HepG2 (cell line): ENCODE measurements at regions of chr5 and their contacts with region 1.

Region 1: GRCh38 chr5:66306105-66306843 is 162.2 kb downstream of the SREK1 start:
- DNase-seq: peak; percentile 55
- ATAC-seq: peak; percentile 93
- H3K4me3 ChIP-seq: no peak overlapping the region
- H3K27ac ChIP-seq: no peak overlapping the region
- H3K4me1 ChIP-seq: no peaks in the 10 kb centered on the region
- H3K27me3 ChIP-seq: peaks cover 0 to 7% of the 10 kb centered on the region in 2 experiments; a peak in 2 of 5 replicates
- CTCF ChIP-seq: peak; percentile 78
- EP300 ChIP-seq: no peak
- POLR2A ChIP-seq: no peak
- RAD21 ChIP-seq: no peak

Region 2: DNA sequence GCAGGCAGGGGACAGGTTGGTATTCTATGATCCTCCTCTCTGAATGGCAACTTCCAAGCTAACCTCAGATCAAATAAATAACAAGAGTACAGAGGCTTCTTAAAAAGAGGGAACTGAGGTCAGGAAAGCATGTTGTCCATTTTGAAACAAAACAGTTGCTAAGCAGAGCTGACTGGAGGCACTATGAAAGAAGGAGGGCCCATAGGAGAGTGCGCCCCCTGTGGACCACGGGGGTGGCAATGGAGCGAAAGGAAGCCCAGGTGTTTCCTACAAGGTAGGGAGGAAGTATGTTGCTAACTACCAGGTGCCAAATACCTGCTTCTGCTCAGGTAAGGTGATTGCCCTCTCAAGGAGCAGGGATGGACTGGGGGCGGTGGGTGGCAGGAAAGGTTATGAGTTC is 188.1 kb after region 1 on chr5:
- CTCF ChIA-PET with region 1: no interaction called
- POLR2A ChIA-PET with region 1: no interaction called
- in situ Hi-C with region 1: no loop called
- intact Hi-C with region 1: loop called (anchors 1 kb)
- DNase-seq: no peak
- ATAC-seq: peak; percentile 32; the same call in 1 of the 3 replicates
- H3K4me3 ChIP-seq: no peak overlapping the region
- H3K27ac ChIP-seq: no peak overlapping the region
- H3K4me1 ChIP-seq: no peaks in the 10 kb centered on the region
- H3K27me3 ChIP-seq: no peaks in the 10 kb centered on the region; a peak in 1 of 5 replicates
- CTCF ChIP-seq: peak; percentile 24; the same call in 1 of the 2 replicates
- EP300 ChIP-seq: no peak
- POLR2A ChIP-seq: no peak
- RAD21 ChIP-seq: no peak

Region 3: GRCh38 chr5:66757188-66757833 is 451.0 kb after region 1 on chr5:
- CTCF ChIA-PET with region 1: interaction called, 46 read pairs
- POLR2A ChIA-PET with region 1: no interaction called
- in situ Hi-C with region 1: loop called (anchors 5 kb)
- intact Hi-C with region 1: loop called (anchors 1 kb)
- DNase-seq: peak; percentile 20
- ATAC-seq: no peak
- H3K4me3 ChIP-seq: no peak overlapping the region
- H3K27ac ChIP-seq: no peak overlapping the region
- H3K4me1 ChIP-seq: no peaks in the 10 kb centered on the region
- H3K27me3 ChIP-seq: peaks cover 0 to 7% of the 10 kb centered on the region in 2 experiments; a peak in 2 of 5 replicates
- CTCF ChIP-seq: peak; percentile 53
- EP300 ChIP-seq: no peak
- POLR2A ChIP-seq: no peak
- RAD21 ChIP-seq: no peak

Region 4: DNA sequence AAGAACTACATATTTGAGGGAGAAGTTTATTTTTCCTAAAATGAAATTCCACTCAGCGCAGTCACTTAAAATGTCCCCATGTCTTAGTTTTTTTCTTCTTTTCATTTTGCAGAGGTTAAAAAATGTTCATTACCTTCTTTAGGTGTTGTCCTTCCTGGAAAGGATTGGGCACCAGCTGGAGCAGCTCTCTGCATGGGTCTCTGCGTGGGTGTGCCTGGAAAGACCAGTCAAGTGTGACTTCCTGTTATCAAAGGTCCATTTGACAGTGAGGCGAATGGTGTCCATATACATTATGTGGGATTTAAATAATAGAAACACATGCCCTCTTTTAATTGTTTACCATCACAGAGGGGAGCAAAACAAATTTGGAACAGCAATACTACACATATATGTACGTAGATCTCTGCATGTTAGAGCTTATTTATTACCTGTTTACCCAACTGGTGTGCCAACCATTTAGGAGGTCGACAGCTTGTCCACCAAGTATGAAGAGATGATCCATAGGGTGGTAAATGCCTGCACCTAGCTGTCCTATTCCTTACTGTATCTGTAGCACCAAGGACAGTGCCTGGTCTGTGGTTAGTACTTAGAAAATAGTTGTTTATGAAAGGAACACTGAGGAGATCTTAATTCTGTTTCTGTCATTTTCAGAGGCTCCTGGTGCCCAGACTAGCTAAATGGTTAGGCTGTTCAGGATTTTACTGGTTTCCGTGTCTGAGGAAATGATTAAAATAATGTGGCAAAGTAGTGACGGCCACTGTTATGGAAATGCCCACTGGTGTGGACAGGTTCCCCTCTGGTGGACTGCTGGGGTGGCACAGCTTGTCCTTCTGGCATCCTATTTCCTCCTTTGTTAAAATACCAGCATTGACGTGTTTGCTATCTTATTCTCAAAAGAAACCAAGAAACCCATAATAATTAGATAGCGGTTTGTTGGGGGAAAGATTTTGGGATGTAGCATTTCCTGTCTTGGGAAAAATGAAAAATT is 490.3 kb after region 1 on chr5:
- CTCF ChIA-PET with region 1: no interaction called
- POLR2A ChIA-PET with region 1: no interaction called
- in situ Hi-C with region 1: no loop called
- intact Hi-C with region 1: loop called (anchors 1 kb)
- DNase-seq: no peak
- ATAC-seq: peak; percentile 36; the same call in 1 of the 3 replicates
- H3K4me3 ChIP-seq: no peak overlapping the region
- H3K27ac ChIP-seq: no peak overlapping the region
- H3K4me1 ChIP-seq: no peaks in the 10 kb centered on the region
- H3K27me3 ChIP-seq: no peaks in the 10 kb centered on the region
- CTCF ChIP-seq: no peak
- EP300 ChIP-seq: no peak
- POLR2A ChIP-seq: no peak
- RAD21 ChIP-seq: no peak

Region 5: DNA sequence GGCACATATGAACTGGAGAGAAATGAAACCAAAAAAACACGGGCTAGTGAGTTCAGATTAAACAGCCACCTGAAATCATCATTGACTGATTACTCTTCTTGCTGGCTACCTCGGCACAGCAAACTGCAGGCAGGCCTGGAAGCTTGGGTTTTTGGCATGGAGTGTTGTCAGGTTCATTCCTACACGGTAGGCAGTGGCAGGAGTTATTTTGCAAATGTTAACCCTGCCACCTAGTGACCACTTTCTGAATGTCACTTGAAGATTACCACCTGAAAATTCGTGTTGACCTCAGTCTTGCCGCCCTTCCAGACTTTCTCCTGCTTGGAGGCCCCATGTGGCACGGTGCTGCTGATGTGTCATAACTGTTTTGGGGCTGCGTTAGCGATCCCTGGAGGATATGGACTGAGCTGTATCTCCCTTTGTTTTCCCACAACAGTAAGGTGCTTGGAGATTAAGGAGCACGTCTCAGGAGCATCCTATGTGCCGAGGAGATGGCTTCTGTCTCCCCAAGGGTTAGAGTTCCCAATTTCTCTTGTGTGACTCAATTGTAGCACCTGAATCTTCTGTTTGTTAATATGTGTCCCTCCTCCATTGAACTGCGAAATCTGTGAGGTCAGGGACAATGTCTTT is 903.0 kb after region 1 on chr5:
- CTCF ChIA-PET with region 1: no interaction called
- POLR2A ChIA-PET with region 1: no interaction called
- in situ Hi-C with region 1: loop called (anchors 10 kb)
- intact Hi-C with region 1: loop called (anchors 2 kb)
- DNase-seq: peak; percentile 61
- ATAC-seq: peak; percentile 94
- H3K4me3 ChIP-seq: no peak overlapping the region
- H3K27ac ChIP-seq: no peak overlapping the region
- H3K4me1 ChIP-seq: peaks cover 5% of the 10 kb centered on the region; the same call in 1 of the 2 replicates
- H3K27me3 ChIP-seq: no peaks in the 10 kb centered on the region
- CTCF ChIP-seq: peak; percentile 91
- EP300 ChIP-seq: no peak
- POLR2A ChIP-seq: no peak
- RAD21 ChIP-seq: peak; percentile 76